BJ (cell line): ENCODE measurements at regions of chr2 and their contacts with region 1.

Region 1: DNA sequence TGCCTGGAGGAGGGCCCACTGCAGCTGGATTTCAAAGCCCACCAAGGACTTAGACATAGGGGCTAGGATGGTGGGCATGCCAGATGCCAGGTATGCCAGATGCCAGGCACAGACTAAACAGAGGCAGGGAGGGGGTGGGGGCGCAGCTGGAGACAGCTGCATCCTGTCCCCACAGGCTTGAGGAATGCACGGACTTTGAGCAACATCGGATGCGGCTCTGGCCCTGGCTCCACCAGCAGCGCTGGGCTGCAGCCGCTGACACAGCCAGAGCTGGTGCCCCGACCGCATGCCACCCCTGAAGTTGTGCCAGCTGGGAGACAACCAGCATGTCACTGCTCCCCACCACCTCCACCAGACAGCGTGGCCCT is 39.5 kb downstream of the AQP12A start:
- DNase-seq: no peak
- H3K4me3 ChIP-seq: no peak overlapping the region
- H3K27me3 ChIP-seq: peaks cover 16% of the 10 kb centered on the region
- CTCF ChIP-seq: no peak

Region 2: GRCh38 chr2:240259201-240259923 is 471.8 kb before region 1 on chr2:
- CTCF ChIA-PET with region 1: no interaction called
- POLR2A ChIA-PET with region 1: no interaction called
- DNase-seq: no peak
- H3K4me3 ChIP-seq: no peak overlapping the region
- H3K27me3 ChIP-seq: peaks cover 3% of the 10 kb centered on the region; the same call in 1 of the 2 replicates
- CTCF ChIP-seq: no peak

Region 3: GRCh38 chr2:240287496-240288086 is 443.6 kb before region 1 on chr2:
- CTCF ChIA-PET with region 1: no interaction called
- POLR2A ChIA-PET with region 1: no interaction called
- DNase-seq: no peak
- H3K4me3 ChIP-seq: no peak overlapping the region
- H3K27me3 ChIP-seq: peaks cover 5% of the 10 kb centered on the region
- CTCF ChIP-seq: no peak

Region 4: GRCh38 chr2:240720686-240721595 is 10.2 kb before region 1 on chr2:
- CTCF ChIA-PET with region 1: no interaction called
- POLR2A ChIA-PET with region 1: interaction called, 11 read pairs
- DNase-seq: no peak
- H3K4me3 ChIP-seq: no peak overlapping the region
- H3K27me3 ChIP-seq: no peaks in the 10 kb centered on the region
- CTCF ChIP-seq: no peak